IMR-90 (cell line): ENCODE measurements at regions of chr14 and their contacts with region 1.

Region 1: DNA sequence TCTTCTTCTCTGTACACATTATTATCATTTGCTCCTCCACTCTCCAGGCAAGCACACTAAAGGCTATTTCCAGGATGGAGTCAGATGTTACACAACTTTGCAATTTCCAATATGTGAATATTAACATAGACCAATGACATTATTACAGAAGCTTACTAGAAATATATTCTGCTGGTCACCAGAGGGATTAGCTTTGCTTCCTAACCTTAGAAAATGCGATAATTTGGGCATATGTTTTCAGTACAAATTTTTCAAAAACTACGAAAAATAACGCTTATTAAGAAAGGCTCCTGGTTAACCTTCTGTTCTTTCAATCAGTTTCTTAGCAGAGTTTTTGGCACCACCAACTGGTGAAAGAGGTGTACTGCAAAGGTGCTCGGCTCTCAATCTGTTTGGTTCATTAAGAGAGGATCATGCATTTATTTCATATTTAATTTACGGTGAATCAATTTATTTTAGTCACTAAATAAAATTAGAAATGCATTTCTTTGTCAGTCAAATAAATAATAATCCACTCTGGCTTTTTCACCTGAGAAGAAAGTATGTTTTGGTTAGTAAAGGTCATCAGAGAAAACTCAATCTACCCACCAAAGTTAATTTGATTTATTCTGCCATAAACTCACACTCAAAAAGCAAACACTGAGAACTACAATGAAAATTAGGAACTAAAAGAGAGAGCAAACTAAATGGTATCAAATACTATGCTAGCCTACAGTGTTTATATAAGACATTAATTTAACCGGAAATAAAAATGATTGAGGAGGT is 39.2 kb downstream of the EFCAB11 start:
- DNase-seq: peak; percentile 80
- ATAC-seq: peak; percentile 48
- H3K4me3 ChIP-seq: no peak overlapping the region
- H3K27ac ChIP-seq: peak overlapping the region; percentile 19; the same call in 1 of the 2 replicates
- H3K4me1 ChIP-seq: peaks cover 27% of the 10 kb centered on the region
- H3K27me3 ChIP-seq: no peaks in the 10 kb centered on the region
- CTCF ChIP-seq: peak; percentile 90
- POLR2A ChIP-seq: 0 out of 2 replicates have a peak, but pooled peaks have one; percentile 23
- RAD21 ChIP-seq: peak; percentile 90

Region 2: GRCh38 chr14:88667555-88668273 is 1247.6 kb before region 1 on chr14:
- CTCF ChIA-PET with region 1: no interaction called
- POLR2A ChIA-PET with region 1: no interaction called
- dilution Hi-C with region 1: no loop called
- in situ Hi-C with region 1: no loop called
- intact Hi-C with region 1: loop called (anchors 5 kb)
- DNase-seq: peak; percentile 83
- ATAC-seq: peak; percentile 98
- H3K4me3 ChIP-seq: no peak overlapping the region
- H3K27ac ChIP-seq: no peak overlapping the region
- H3K4me1 ChIP-seq: 0 out of 2 replicates have a peak, but pooled peaks cover 3% of the 10 kb centered on the region
- H3K27me3 ChIP-seq: no peaks in the 10 kb centered on the region
- CTCF ChIP-seq: peak; percentile 91
- POLR2A ChIP-seq: no peak
- RAD21 ChIP-seq: peak; percentile 89

Region 3: DNA sequence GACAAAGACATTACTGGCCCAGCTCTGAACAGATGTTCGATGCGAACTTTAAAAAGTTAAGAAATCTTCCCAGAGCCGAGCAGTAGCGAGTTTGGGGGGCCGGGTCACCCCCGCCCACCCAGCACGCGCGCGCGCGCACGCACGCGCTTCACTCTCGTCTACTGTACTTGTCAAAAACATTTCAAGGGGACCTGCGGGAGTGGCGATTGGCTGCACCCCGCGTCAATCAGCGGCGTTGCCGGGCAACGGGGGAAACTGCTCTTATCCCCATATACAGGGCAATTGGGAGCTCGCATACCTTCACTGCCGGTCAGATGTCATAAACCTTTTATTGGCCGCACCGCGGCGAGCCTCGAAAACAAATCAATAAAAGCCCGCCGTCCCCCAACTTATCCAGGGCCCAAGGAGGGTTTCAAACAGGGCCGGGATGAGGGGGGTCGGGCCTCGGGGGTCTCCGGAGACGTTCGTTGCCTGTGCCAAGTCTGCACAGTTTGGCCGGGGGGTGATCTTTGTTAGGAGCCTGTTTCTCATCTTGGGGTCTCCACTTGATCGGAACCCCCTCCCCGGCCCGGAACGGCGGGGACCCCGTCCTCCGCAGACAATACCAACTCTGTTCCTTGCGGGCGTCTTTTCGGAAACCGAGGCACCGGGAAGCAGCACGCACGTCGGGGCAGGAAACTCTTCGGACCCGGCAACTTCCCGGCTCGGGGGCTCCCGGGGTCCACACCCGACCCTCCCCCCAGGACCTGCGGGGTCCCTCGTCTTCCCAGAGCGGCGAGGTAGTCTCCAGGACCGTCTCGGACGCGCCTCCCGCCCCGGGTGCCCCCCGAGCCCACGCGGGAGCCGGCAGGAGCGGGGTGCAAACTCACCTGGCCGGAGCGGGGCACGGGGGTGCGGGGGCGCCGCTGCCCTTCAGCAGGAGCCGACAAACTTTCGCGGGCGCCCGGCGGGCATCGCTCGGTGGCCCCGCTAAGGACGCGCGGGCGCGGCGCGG is 499.0 kb before region 1 on chr14:
- CTCF ChIA-PET with region 1: no interaction called
- POLR2A ChIA-PET with region 1: interaction called, 4 read pairs
- dilution Hi-C with region 1: no loop called
- in situ Hi-C with region 1: no loop called
- intact Hi-C with region 1: loop called (anchors 2 kb)
- DNase-seq: peak; percentile 97
- ATAC-seq: peak; percentile 81
- H3K4me3 ChIP-seq: peak overlapping the region; percentile 62
- H3K27ac ChIP-seq: peak overlapping the region; percentile 60
- H3K4me1 ChIP-seq: peaks cover 12% of the 10 kb centered on the region
- H3K27me3 ChIP-seq: no peaks in the 10 kb centered on the region
- CTCF ChIP-seq: no peak
- POLR2A ChIP-seq: peak; percentile 69
- RAD21 ChIP-seq: no peak; the same call in 1 of the 2 replicates

Region 4: GRCh38 chr14:89540830-89541470 is 374.3 kb before region 1 on chr14:
- CTCF ChIA-PET with region 1: interaction called, 3 read pairs
- POLR2A ChIA-PET with region 1: no interaction called
- dilution Hi-C with region 1: no loop called
- in situ Hi-C with region 1: no loop called
- intact Hi-C with region 1: loop called (anchors 5 kb)
- DNase-seq: peak; percentile 95
- ATAC-seq: peak; percentile 86
- H3K4me3 ChIP-seq: peak overlapping the region; percentile 16; the same call in 1 of the 2 replicates
- H3K27ac ChIP-seq: peak overlapping the region; percentile 89
- H3K4me1 ChIP-seq: peaks cover 13% of the 10 kb centered on the region
- H3K27me3 ChIP-seq: no peaks in the 10 kb centered on the region
- CTCF ChIP-seq: no peak
- POLR2A ChIP-seq: no peak
- RAD21 ChIP-seq: no peak; the same call in 1 of the 2 replicates

Region 5: DNA sequence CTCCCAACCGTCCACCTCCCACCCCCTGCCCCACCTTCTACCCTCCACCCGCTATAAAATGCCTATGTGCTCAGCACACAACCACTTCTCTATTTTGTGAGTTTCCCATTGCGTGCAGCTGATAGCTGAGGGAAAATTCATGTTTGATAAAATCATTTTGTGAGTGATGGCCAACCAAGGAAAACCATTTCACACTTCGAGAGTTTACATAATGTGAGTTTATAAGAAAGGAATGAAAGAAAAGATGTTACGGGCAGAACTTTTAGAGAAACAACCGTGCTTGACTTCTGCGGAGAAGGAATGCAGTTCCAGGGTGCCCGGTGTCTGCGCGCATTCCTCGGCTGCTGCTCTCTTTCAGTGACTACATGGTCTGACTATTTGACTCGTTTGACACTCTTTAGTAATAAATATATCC is 101.7 kb before region 1 on chr14:
- CTCF ChIA-PET with region 1: no interaction called
- POLR2A ChIA-PET with region 1: no interaction called
- dilution Hi-C with region 1: no loop called
- in situ Hi-C with region 1: no loop called
- intact Hi-C with region 1: loop called (anchors 5 kb)
- DNase-seq: peak; percentile 96
- ATAC-seq: peak; percentile 96
- H3K4me3 ChIP-seq: no peak overlapping the region
- H3K27ac ChIP-seq: peak overlapping the region; percentile 34; the same call in 1 of the 2 replicates
- H3K4me1 ChIP-seq: peaks cover 8% of the 10 kb centered on the region
- H3K27me3 ChIP-seq: no peaks in the 10 kb centered on the region
- CTCF ChIP-seq: no peak
- POLR2A ChIP-seq: no peak
- RAD21 ChIP-seq: no peak; the same call in 1 of the 2 replicates